Activated CD4-positive, alpha-beta T cell treated with anti-CD3 and anti-CD28 coated beads, Interleukin-2, amount 10 ng/mL, durations not matched to agents 24 days and 14 days (primary cell): ENCODE measurements at regions of chr2 and their contacts with region 1.

Region 1: DNA sequence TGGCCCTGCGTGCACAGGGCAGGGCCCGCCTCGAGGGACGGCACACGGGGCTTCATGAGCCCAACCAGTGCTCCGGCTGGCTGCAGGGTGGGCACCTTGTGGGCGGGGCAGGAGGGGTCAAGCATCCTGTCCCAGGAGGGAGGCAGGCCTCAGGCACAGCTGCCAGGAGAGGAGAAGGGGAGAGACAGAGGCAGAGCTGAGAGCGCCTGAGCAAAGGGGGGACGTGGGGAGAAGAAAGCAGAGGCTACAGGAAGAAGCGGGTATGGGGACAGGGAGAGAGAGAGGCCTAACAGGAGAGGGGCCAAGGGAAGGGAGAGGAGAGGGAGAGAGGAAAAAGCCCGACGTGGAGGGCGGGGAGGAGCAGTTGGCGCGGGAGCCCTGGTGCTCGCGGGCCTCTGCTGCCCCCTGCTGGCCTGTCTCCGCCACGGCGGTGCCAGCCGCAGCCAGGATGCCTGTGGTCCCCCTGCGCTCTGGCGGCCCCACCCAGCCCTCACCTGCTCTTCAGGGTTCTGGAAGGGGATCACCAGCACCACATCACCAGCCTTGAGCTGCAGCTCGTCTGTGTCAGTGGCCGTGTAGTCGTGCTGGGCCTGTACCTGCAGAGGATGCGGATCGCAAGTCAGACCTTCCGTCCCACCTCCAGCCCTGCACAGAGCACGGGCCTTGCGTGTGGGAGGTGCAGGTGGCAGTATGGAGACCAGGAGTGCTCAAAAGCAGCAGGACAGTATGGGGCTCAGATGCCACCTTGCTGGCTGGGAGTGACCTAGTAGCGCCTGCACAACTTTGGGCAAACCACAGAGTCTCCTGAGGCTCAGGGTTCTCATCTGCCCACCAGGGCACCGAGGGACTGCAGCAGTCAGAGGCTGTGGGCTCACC is 56.8 kb downstream of the BIN1 start:
- DNase-seq: peak; percentile 89
- H3K4me3 Mint-ChIP-seq: no peak overlapping the region
- H3K27ac Mint-ChIP-seq: no peak overlapping the region
- H3K4me1 Mint-ChIP-seq: peaks cover 2% of the 10 kb centered on the region
- H3K27me3 Mint-ChIP-seq: no peaks in the 10 kb centered on the region

Region 2: DNA sequence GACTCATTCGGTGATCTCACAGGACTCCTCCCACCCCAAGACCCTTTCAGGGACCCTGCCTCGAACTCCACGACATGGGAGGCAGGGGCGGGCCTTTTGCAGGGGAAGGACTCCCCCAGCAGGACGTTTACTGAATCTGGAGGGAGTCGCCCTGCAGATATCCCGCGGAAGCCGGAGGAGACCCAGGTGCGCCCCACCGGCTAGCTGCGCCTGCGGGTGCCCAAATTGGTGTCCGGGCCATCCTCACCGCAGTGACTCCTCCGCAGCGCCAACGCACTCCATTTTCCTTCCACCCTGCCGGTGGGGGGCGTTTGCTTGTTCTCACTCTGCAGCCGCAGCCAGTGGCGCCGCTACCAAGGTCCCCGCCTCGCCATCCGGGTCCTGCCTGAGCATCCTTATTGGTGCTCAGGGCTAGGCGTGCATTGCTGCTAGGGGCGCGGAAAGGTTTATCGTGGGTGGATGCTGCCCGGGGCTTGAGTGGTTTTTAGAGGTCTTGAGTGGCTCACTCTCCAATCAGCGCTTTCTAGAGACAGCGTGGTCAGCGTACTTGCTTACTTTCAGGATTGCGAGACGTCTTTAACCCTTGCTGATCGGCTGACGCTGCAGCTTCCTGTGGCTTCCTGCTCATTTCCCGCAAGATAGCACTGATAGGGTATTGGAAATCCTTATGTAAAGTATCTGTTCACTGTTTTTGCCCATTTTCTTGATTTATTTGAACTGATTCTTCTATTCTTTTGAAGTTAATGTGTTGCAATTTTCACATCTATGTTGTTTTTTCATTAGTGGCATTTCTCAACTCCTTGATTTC is 24.6 kb before region 1 on chr2:
- intact Hi-C with region 1: loop called (anchors 1 kb)
- DNase-seq: peak; percentile 93
- H3K4me3 Mint-ChIP-seq: peak overlapping the region; percentile 83
- H3K27ac Mint-ChIP-seq: peak overlapping the region; percentile 38
- H3K4me1 Mint-ChIP-seq: peaks cover 13% of the 10 kb centered on the region
- H3K27me3 Mint-ChIP-seq: peaks cover 31% of the 10 kb centered on the region